ENCODE measurements at regions of chr9 and their contacts with region 1.

Region 1: GRCh38 chr9:126514047-126514821 is 99.5 kb upstream of the LMX1B start:
- DNase-seq: no peak
- H3K4me3 ChIP-seq: no peak overlapping the region
- H3K27me3 ChIP-seq: peaks cover 8% of the 10 kb centered on the region
- CTCF ChIP-seq: 0 out of 2 replicates have a peak, but pooled peaks have one; percentile 6

Region 2: DNA sequence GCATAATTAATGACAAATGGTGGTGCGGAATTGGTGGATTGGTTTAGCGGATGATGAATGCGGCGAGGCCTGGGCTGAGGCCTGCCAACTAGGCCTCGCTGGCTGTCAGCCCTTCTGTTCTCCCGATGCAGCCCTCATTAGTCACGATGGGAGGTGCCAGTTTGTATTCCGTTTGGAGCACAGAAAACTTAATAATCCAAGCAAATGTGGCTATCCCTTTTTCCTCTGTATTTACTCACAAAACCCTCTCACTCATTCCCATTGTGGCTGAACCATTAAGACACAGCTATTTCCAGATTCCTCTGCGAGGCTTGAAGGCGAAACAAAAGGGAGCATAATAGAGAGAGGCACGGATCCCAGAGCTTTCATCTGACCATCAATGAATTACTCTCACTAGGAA is 73.3 kb before region 1 on chr9:
- CTCF ChIA-PET with region 1: no interaction called
- POLR2A ChIA-PET with region 1: no interaction called
- DNase-seq: no peak
- H3K4me3 ChIP-seq: no peak overlapping the region
- H3K27me3 ChIP-seq: no peaks in the 10 kb centered on the region
- CTCF ChIP-seq: no peak

Region 3: DNA sequence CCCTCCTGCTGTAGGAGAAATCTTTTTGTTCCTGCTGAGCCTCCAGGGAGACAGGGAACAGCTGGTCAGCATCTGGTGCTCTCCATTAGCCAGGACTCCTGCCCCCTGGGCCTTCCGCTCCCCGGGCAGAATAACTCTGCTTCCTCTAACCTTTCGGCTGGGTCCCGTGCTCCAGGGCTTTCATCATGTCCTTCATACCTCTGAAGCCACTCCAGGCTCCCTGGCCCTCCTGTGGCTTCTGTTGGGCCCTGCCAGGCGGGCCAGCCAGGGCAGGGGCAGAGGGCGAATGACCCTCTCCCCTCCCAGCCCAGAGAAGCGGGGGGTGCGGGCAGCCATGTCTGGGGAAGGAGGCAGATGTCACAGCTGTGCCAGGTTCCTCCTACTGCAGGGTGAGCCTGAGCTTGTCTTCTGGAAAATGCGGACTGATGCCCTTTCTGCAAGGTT is 17.8 kb after region 1 on chr9:
- CTCF ChIA-PET with region 1: interaction called, 10 read pairs
- POLR2A ChIA-PET with region 1: no interaction called
- DNase-seq: no peak
- H3K4me3 ChIP-seq: no peak overlapping the region
- H3K27me3 ChIP-seq: peaks cover 14% of the 10 kb centered on the region
- CTCF ChIP-seq: no peak